CD4-positive, alpha-beta memory T cell (primary cell): ENCODE measurements at regions of chr9 and their contacts with region 1.

Region 1: DNA sequence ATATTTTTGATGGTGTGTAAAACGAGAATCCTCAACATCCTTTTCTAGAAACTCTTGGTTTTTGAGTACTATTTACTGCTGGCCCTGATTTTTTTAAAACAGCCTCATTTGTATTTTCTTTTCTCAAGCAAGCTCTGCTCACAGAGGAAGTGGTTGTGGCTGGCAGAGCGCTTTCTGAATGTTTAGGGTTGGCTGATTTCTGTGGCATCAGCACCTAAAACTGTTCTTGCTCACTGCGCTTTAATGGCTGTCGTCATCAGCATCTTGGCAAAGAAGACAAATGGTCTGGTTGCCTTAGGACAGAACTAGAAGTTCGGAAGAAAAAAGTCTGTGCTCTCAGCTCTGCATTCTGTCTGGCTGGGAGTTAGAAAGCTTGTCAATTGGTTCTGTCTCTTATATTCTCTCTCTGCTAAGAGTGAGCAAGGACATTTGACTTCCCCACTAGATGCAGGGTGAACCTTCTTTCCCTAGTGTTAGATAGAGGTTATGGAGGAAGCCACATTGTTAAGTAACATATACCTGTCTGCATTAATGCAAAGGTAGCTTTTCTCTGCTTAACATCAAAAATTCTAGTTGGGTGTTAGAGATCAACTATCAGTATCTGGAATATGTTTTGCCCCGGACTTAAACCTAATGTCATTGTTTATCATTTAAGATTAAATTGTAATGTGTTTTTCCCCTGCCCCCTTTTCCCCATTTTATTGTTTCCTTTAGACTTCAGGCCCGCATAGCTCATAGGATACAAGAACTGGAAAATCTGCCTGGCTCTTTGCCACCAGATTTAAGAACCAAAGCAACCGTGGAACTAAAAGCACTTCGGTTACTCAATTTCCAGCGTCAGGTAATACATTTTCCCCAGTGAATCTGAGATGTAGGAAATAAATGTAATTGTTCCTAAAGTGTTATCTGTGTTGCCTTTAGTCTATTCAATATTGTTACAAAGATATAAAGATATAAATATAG is 39.0 kb downstream of the SMARCA2 start:
- DNase-seq: peak; percentile 83 to 88 (median 87)
- H3K4me3 ChIP-seq: peak overlapping the region in 1 of 2 donors; percentile 33
- H3K4me3 Mint-ChIP-seq: peak overlapping the region; percentile 42 to 84 (median 73)
- H3K27ac ChIP-seq: peak overlapping the region; percentile 50
- H3K27ac Mint-ChIP-seq: peak overlapping the region; percentile 93 to 99 (median 96)
- H3K4me1 ChIP-seq: peaks cover 53% of the 10 kb centered on the region
- H3K4me1 Mint-ChIP-seq: peaks cover 42 to 70% (median 54%) of the 10 kb centered on the region in 4 donors
- H3K27me3 ChIP-seq: no peaks in the 10 kb centered on the region
- H3K27me3 Mint-ChIP-seq: no peaks in the 10 kb centered on the region

Region 2: DNA sequence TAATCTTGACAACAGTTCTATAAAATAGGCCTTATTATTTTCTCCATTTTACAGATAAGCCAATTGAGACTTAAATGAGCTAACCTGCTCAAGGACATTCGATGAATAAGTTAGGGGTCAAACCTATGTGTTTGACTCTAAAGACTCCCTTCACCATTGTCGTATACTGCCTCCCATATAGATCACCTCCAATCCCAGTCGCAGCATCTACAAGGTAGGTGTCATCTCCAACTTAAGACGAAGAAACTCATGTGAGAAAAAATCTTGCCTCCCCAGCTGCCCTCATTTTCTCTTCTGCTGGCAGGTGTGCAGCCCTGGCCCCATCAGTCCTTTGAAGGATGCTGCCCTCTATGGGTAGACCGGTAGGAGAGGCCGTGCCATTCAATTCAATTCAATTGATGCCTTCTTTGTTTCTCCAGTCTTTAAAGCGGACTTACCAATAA is 114.2 kb before region 1 on chr9:
- CTCF ChIA-PET with region 1: interaction called, 3 read pairs
- POLR2A ChIA-PET with region 1: no interaction called
- intact Hi-C with region 1: loop called (anchors 10 kb)
- DNase-seq: peak; percentile 38 to 48 (median 46)
- H3K4me3 ChIP-seq: no peak overlapping the region
- H3K4me3 Mint-ChIP-seq: no peak overlapping the region
- H3K27ac ChIP-seq: no peak overlapping the region
- H3K27ac Mint-ChIP-seq: no peak overlapping the region
- H3K4me1 ChIP-seq: no peaks in the 10 kb centered on the region
- H3K4me1 Mint-ChIP-seq: peaks cover 0 to 4% (median 2%) of the 10 kb centered on the region in 4 donors
- H3K27me3 ChIP-seq: no peaks in the 10 kb centered on the region
- H3K27me3 Mint-ChIP-seq: peaks cover 1 to 7% of the 10 kb centered on the region in 2 donors

Region 3: GRCh38 chr9:2023532-2023931 is 30.6 kb before region 1 on chr9:
- CTCF ChIA-PET with region 1: interaction called, 6 read pairs
- POLR2A ChIA-PET with region 1: interaction called, 174 read pairs
- intact Hi-C with region 1: loop called (anchors 1 kb)
- DNase-seq: no peak
- H3K4me3 ChIP-seq: no peak overlapping the region
- H3K4me3 Mint-ChIP-seq: peak overlapping the region; percentile 9 to 79 (median 76)
- H3K27ac ChIP-seq: peak overlapping the region; percentile 37
- H3K27ac Mint-ChIP-seq: peak overlapping the region; percentile 84 to 96 (median 91)
- H3K4me1 ChIP-seq: peaks cover 100% of the 10 kb centered on the region
- H3K4me1 Mint-ChIP-seq: peaks cover 79 to 100% (median 92%) of the 10 kb centered on the region in 4 donors
- H3K27me3 ChIP-seq: no peaks in the 10 kb centered on the region
- H3K27me3 Mint-ChIP-seq: no peaks in the 10 kb centered on the region

Region 4: GRCh38 chr9:2039294-2040190 is 14.6 kb before region 1 on chr9:
- CTCF ChIA-PET with region 1: interaction called, 4 read pairs
- POLR2A ChIA-PET with region 1: interaction called, 5 read pairs
- intact Hi-C with region 1: loop called (anchors 2 kb)
- DNase-seq: peak in 1 of 5 donors; percentile 22
- H3K4me3 ChIP-seq: no peak overlapping the region
- H3K4me3 Mint-ChIP-seq: no peak overlapping the region
- H3K27ac ChIP-seq: no peak overlapping the region
- H3K27ac Mint-ChIP-seq: peak overlapping the region in 1 of 7 donors; percentile 14
- H3K4me1 ChIP-seq: peaks cover 18% of the 10 kb centered on the region
- H3K4me1 Mint-ChIP-seq: peaks cover 39 to 65% (median 56%) of the 10 kb centered on the region in 4 donors
- H3K27me3 ChIP-seq: no peaks in the 10 kb centered on the region
- H3K27me3 Mint-ChIP-seq: no peaks in the 10 kb centered on the region

Region 5: DNA sequence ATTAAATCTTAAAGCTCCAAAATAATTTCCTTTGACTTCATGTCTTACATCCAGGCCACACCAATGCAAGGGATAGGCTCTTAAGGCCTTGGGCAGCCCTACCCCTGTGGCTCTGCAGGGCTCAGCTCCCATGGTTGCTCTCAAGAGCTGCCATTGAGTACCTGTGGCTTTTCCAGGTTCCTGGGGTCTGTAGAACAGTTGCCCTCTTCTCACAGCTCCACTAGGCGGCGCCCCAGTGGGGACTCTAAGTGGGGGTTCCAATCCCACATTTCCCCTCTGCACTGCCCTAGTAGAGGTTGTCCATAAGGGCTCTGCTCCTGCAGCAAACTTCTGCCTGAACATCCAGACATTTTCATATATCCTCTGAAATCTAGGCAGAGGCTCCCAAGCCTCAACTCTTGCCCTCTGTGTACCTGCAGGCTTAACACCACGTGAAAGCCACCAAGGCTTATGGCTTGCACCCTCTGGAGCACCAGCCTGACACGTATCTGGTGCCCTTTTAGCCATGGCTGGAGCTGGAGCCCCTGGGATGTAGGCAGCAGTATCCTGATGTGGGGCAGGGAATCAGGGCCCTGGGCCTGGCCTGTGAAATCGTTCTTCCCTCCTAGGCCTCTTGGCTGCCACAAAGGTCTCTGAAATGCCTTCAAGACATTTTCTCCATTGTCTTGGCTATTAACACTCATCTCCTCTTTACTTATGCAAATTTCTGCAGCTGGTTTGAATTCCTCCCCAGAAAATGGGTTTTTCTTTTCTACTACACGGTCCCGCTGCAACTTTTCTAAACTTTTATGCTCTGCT is 146.0 kb after region 1 on chr9:
- CTCF ChIA-PET with region 1: no interaction called
- POLR2A ChIA-PET with region 1: no interaction called
- intact Hi-C with region 1: no loop called
- DNase-seq: no peak
- H3K4me3 ChIP-seq: no peak overlapping the region
- H3K4me3 Mint-ChIP-seq: no peak overlapping the region
- H3K27ac ChIP-seq: no peak overlapping the region
- H3K27ac Mint-ChIP-seq: peak overlapping the region in 1 of 7 donors; percentile 7
- H3K4me1 ChIP-seq: no peaks in the 10 kb centered on the region
- H3K4me1 Mint-ChIP-seq: peaks cover 0 to 3% (median under 1%) of the 10 kb centered on the region in 4 donors
- H3K27me3 ChIP-seq: no peaks in the 10 kb centered on the region
- H3K27me3 Mint-ChIP-seq: no peaks in the 10 kb centered on the region